Activated T-helper 2 cell treated with anti-CD3 and anti-CD28 coated beads, Interferon-gamma antibody, Interleukin-2, Interleukin-4, amounts not matched to agents 10 μg/mL and 5 μg/mL and 100 μg/mL, durations not matched to agents 14 hours and 24 hours and 36 hours (primary cell): ENCODE measurements at regions of chr1 and their contacts with region 1.

Region 1: DNA sequence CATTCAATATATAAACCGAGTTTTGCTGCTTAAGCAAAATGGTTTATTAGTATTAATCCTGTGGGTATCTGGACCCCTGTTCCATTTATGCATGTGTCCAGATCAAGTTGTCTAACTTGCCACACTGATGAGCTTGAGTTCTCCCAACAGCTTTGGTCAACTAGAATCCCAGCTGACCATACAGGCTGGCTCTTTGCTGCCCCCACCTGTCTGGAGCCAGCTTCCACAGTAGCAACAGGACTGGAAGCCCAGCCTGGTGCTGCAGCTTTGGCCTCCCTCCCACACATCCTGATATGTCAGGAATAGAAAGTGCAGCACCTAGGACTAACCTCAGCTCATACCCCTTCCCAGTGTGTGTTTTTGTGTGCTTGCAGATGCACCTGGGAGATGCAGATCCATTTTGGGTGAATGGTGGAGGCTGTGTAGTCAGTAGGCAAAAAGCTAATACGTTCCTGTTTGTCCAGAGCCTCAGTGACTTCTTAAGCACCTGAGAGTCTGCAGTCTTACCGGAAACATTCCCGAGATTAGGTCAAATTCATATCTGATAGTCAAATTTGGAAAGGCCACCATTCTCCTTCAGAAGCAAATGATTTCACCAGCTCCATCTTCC is 40.9 kb upstream of the BEND5 start:
- DNase-seq: no peak
- H3K4me3 Mint-ChIP-seq: no peak overlapping the region
- H3K27ac Mint-ChIP-seq: no peak overlapping the region
- H3K4me1 Mint-ChIP-seq: no peaks in the 10 kb centered on the region
- H3K27me3 Mint-ChIP-seq: peaks cover 8% of the 10 kb centered on the region

Region 2: DNA sequence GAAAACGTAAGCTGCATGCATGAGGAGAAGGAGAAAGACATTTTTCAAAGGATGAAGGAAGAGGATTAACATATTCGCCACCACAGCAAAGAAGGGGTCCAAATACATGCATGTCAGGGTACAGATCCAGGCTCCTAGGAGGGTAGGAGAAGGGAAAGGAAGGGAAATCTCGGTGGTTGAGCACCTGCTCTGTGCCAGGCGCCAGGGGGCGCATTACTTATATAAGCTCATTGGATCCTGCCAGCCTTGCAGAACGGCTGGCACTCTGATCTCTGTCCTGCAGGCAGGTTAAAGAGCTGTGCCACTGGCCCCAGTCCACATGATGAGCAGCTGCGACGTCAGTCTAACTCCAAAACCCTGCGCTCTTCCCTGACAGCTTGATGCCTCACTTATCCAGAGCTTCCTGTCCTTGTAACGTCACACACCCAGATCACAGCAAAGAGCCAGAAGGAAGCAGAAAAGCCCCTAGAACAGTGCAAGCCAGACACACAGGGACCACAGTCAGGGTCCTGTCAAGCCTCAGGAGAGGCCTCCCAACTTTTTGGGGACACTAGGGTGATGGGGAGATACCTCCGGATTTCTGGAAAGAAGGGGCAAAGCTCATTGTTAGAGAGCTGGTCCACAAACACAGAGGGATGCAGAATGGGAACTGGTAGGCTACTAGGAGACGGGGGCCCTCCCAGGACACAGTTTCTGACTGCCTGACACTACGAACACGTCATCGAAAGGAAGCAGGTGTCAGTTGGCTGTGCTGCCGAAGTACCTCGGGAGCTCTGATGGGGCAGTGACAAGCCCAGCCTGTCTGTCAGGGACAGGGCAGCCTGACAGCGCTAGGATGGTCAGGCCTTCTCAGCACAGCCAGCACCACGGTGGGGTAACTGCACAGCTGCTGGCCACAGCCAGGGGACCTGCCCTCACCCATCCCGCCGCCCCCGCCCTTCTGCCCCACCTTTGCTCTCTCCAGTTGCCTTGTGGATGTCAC is 140.0 kb before region 1 on chr1:
- intact Hi-C with region 1: loop called (anchors 2 kb)
- DNase-seq: no peak
- H3K4me3 Mint-ChIP-seq: no peak overlapping the region
- H3K27ac Mint-ChIP-seq: no peak overlapping the region
- H3K4me1 Mint-ChIP-seq: peaks cover 4% of the 10 kb centered on the region
- H3K27me3 Mint-ChIP-seq: peaks cover 9% of the 10 kb centered on the region

Region 3: GRCh38 chr1:48697066-48697707 is 120.4 kb before region 1 on chr1:
- intact Hi-C with region 1: loop called (anchors 5 kb)
- DNase-seq: peak; percentile 22
- H3K4me3 Mint-ChIP-seq: no peak overlapping the region
- H3K27ac Mint-ChIP-seq: no peak overlapping the region
- H3K4me1 Mint-ChIP-seq: no peaks in the 10 kb centered on the region
- H3K27me3 Mint-ChIP-seq: peaks cover 16% of the 10 kb centered on the region

Region 4: GRCh38 chr1:48725331-48726046 is 92.1 kb before region 1 on chr1:
- intact Hi-C with region 1: no loop called
- DNase-seq: no peak
- H3K4me3 Mint-ChIP-seq: no peak overlapping the region
- H3K27ac Mint-ChIP-seq: no peak overlapping the region
- H3K4me1 Mint-ChIP-seq: no peaks in the 10 kb centered on the region
- H3K27me3 Mint-ChIP-seq: peaks cover 3% of the 10 kb centered on the region

Region 5: GRCh38 chr1:48776393-48777218 is 41.0 kb before region 1 on chr1 and contains the start of gene BEND5:
- intact Hi-C with region 1: no loop called
- DNase-seq: peak; percentile 25
- H3K4me3 Mint-ChIP-seq: peak within 1 kb of the TSS; percentile 90
- H3K27ac Mint-ChIP-seq: peak within 1 kb of the TSS; percentile 78
- H3K4me1 Mint-ChIP-seq: peaks cover 35% of the 10 kb centered on the region
- H3K27me3 Mint-ChIP-seq: peaks cover 25% of the 10 kb centered on the region
- total RNA-seq, gene BEND5: 10.2 and 13.1 TPM in 2 replicates